Posterior cingulate gyrus (tissue), 11 donors: ENCODE measurements at regions of chr18 and their contacts with region 1.

Region 1: GRCh38 chr18:31371989-31372388 is 4.6 kb upstream of the DSG4 start:
- DNase-seq: no peak

Region 2: GRCh38 chr18:31294199-31294752 is 77.7 kb before region 1 on chr18:
- intact Hi-C with region 1: no loop called
- DNase-seq: peak in 1 of 10 donors; percentile 51

Region 3: GRCh38 chr18:31316974-31317373 is 55.0 kb before region 1 on chr18:
- intact Hi-C with region 1: loop called (anchors 10 kb)
- DNase-seq: no peak